ENCODE measurements at regions of chr16 and their contacts with region 1.

Region 1: GRCh38 chr16:58629572-58630104 is at the start of gene CNOT1:
- DNase-seq: peak; percentile 99
- H3K4me3 ChIP-seq: peak within 1 kb of the TSS; percentile 94
- H3K27ac ChIP-seq: peak within 1 kb of the TSS; percentile 95
- H3K4me1 ChIP-seq: peaks cover 3% of the 10 kb centered on the region
- H3K27me3 ChIP-seq: no peaks in the 10 kb centered on the region
- CTCF ChIP-seq: no peak
- total RNA-seq, gene CNOT1: 255 and 259 TPM in 2 replicates

Region 2: DNA sequence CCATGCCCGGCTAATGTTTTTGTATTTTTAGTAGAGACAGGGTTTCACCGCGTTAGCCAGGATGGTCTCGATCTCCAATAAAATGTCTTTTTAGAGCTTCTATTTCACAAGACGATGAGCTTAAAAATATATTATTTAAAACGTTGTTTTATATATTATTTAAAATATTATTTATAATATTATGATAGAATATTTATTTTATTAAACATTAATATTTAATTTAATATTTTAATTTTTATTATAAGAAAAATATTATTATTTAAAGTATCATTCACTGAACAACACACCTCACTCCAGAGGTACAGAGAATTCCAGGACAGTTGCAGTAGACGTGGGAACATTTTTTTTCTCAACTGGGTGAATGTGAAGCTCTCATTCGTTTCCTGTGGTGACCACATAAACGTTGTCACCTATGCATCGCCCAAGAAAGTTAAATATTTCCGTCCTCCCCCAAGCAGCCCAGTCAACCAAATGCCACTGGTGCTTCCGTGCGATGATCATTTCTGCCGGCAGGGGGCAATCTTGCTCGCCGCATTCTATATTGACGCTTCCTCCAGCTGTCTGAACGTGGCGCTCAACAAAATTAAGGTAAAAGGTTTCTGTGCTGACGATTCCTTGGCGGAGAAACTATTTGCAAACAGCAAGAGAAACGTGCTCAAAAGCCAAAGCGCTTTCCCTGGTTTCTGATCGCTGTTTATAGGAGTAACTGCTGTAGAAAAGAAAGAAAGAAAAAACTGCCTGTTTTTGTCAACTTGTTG is 293.1 kb before region 1 on chr16:
- CTCF ChIA-PET with region 1: no interaction called
- POLR2A ChIA-PET with region 1: no interaction called
- intact Hi-C with region 1: loop called (anchors 10 kb)
- DNase-seq: peak; percentile 83
- H3K4me3 ChIP-seq: peak overlapping the region; percentile 28
- H3K27ac ChIP-seq: no peak overlapping the region
- H3K4me1 ChIP-seq: peaks cover 5% of the 10 kb centered on the region
- H3K27me3 ChIP-seq: no peaks in the 10 kb centered on the region
- CTCF ChIP-seq: peak; percentile 96

Region 3: DNA sequence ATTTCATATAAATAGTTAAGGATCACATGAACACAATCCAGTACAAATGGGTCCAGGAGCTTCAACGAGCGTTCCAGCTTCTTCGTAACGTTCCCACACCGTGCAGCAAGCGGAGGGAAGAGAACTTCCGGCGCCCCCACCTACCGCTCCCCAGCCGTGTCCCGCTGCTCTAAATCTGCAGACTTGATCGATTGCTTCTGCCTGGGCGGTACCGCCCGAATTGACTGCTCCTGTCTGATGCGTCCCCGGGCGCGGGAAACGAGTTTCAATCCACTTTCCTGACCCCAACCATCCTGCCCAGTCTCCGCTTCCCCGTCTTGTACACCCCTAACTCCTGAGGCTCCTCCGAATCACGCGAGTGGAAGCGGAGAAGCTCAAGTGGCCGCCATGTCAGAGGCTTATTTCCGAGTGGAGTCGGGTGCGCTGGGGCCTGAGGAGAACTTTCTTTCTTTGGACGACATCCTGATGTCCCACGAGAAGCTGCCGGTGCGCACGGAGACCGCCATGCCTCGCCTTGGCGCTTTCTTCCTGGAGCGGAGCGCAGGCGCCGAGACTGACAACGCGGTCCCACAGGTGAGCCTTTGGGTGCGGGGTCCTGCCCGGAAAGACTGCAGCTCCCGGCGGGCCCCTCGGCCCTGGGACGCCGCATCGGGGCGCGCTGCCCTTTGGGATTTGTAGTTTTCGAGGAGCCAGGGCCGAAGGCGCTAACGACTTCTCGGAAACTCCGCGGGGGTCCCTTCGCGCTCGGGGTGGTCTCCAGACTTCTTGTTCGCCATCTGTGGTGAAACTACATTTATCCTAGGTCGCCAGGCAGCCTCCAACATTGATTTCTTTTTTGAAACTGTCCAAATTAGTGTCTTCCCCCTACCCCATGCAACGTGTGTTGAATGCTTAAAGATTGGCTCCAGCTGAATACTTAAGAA is 237.2 kb before region 1 on chr16 and contains the start of gene GINS3:
- CTCF ChIA-PET with region 1: no interaction called
- POLR2A ChIA-PET with region 1: no interaction called
- intact Hi-C with region 1: loop called (anchors 5 kb)
- DNase-seq: peak; percentile 95
- H3K4me3 ChIP-seq: peak within 1 kb of the TSS; percentile 75
- H3K27ac ChIP-seq: peak within 1 kb of the TSS; percentile 89
- H3K4me1 ChIP-seq: no peaks in the 10 kb centered on the region
- H3K27me3 ChIP-seq: no peaks in the 10 kb centered on the region
- CTCF ChIP-seq: no peak
- total RNA-seq, gene GINS3: 22.0 and 22.2 TPM in 2 replicates

Region 4: GRCh38 chr16:59148056-59148768 is 518.6 kb after region 1 on chr16:
- CTCF ChIA-PET with region 1: no interaction called
- POLR2A ChIA-PET with region 1: no interaction called
- intact Hi-C with region 1: no loop called
- DNase-seq: no peak
- H3K4me3 ChIP-seq: no peak overlapping the region
- H3K27ac ChIP-seq: no peak overlapping the region
- H3K4me1 ChIP-seq: no peaks in the 10 kb centered on the region
- H3K27me3 ChIP-seq: no peaks in the 10 kb centered on the region
- CTCF ChIP-seq: no peak

Measured in A673 (cell line).